ENCODE measurements at regions of chr14 and their contacts with region 1.

Region 1: GRCh38 chr14:57317316-57317715 is 48.5 kb downstream of the AP5M1 start:
- DNase-seq: peak; percentile 75
- H3K4me3 ChIP-seq: no peak overlapping the region
- CTCF ChIP-seq: peak; percentile 92

Region 2: DNA sequence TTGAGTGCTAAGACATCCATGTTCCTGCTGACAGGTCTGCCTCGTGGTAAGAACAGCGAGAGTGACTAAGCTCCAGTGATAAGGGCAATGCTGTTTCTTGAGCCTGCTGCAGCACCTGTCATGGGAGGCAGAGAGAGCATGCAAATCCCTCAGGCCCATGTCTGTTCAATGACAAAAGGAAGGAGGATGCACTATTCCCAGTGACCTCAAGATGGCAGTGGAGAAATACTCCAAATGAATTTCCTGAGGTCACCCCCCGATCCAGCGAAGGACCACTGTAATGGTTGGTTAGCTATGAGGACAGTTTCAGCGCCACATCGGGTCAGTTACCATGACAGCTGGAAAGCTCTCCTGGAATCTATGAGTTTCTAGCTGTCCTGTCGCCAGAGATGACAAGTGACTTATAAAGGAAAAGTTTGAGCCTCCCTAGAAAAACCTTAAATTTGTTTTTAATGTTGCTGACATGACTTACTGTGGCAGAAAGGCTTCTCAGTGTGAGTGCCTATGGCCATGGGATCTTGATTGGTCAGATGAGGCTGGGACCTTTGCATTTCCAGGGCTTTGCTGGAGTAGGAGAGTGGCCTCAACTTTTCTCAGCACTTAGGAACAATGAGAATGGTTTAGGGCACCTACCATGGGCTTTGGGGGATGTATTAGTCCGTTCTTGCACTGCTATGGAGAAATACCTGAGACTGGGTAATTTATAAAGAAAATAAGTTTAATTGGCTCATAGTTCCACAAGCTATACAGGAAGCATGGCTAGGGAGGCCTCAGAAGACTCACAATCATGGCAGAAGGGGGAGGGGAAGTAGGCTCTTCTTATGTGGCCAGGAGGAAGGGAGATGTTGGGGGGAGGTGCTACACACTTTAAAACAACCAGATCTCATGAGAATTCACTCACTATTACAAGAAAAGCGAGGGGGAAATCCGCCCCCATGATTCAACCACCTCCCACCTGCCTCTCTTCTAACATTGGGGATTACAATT is 825.7 kb before region 1 on chr14:
- in situ Hi-C with region 1: loop called (anchors 25 kb)
- DNase-seq: peak; percentile 40
- H3K4me3 ChIP-seq: no peak overlapping the region
- CTCF ChIP-seq: peak; percentile 81

Measured in astrocyte of the cerebellum (primary cell).